Posterior cingulate gyrus (tissue), 11 donors: ENCODE measurements at regions of chr1 and their contacts with region 1.

Region 1: GRCh38 chr1:28369371-28370238 is at the start of gene PHACTR4:
- DNase-seq: peak; percentile 81 to 99 (median 90)

Region 2: DNA sequence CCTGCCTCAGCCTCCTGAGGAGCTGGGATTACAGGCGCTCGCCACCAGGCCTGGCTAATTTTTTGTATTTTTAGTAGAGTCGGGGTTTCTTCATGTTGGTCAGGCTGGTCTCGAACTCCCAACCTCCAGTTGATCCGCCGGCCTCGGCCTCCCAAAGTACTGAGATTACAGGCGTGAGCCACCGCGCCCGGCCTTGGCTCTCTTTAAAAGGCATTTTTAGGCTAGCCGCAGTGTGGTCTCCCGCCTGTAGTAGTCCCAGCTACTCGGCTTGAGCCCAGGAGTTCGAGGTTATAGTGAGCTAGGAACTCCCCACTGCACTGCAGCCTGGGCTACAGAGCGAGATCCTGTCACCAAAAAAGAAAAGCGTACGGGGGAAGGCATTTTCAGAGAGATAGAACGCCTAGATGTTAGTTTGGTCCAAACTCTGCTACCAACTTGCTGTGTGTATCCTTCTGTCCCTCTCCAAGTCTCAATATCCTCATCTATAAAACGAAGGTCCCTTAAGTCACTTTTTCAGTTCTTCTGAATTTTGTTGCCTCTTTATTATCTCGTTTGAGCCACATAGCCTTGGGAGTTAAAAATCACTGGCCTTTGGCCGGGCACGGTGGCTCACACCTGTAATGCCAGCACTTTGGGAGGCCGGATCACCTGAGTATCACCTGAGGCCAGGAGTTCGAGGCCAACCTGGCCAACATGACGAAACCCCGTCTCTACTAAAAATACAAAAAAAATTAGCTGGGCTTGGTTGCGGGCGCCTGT is 40.0 kb before region 1 on chr1:
- intact Hi-C with region 1: loop called (anchors 2 kb)
- DNase-seq: peak in 6 of 10 donors; percentile 6 to 76 (median 10)

Region 3: GRCh38 chr1:28505406-28506187 is 136.0 kb after region 1 on chr1 and contains the start of gene RCC1:
- intact Hi-C with region 1: loop called (anchors 5 kb)
- DNase-seq: peak; percentile 88 to 99 (median 92)